ENCODE measurements at regions of chr12 and their contacts with region 1.

Region 1: DNA sequence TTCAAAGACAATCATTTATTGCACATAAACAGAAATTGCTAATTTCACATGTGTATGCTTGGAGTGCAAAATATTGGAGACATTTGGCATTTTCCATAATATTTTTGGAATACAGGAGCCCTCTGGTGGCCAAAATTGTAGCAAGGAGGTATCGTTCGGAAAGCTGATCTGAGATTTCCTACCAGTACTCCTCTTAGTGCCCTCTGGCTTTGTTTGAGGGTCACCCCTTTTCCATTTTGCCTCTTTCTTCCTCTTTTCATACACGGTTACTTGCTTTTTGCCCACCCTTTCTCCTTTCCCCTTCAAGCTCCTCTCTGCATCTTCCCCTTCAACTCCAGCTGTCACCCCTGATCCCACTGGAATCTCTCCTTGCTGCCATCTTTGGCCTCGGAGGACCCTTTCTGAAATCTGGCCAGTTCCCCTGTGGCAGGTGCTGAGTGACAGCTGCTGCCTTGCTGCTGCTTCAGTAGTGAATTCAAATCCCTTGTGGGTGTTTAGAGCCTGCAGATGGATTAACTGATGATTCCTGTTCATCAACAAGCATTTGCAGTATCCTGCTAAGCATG is 164.6 kb upstream of the PARP11 start:
- DNase-seq: peak; percentile 47
- H3K4me3 ChIP-seq: no peak overlapping the region
- H3K27ac ChIP-seq: no peak overlapping the region
- H3K4me1 ChIP-seq: peaks cover 19% of the 10 kb centered on the region
- H3K27me3 ChIP-seq: no peaks in the 10 kb centered on the region
- CTCF ChIP-seq: peak; percentile 75 to 79

Region 2: DNA sequence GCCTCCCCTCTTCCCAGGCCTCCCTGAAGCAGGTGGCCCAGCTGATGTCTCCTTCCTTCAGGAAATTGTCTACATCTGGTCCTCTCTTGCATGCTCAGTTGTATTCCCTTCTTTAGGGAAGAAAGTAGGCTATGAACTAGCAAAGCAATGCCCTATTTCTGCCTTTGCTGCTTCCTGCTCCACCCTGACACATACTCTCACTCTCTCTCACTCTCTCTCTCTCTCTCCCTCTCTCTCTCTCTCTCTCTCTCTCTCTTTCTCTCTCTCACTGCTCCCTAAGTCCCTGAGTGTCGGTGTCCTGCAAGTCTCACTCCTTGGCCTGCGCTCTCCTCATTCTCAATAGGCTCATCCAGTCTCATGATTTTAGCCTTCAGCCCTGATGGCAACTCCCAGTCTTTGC is 145.2 kb before region 1 on chr12:
- CTCF ChIA-PET with region 1: no interaction called
- dilution Hi-C with region 1: loop called (anchors 5 kb)
- in situ Hi-C with region 1: loop called (anchors 5 to 25 kb)
- intact Hi-C with region 1: no loop called
- DNase-seq: no peak
- H3K4me3 ChIP-seq: no peak overlapping the region
- H3K27ac ChIP-seq: no peak overlapping the region
- H3K4me1 ChIP-seq: no peaks in the 10 kb centered on the region
- H3K27me3 ChIP-seq: peaks cover 5% of the 10 kb centered on the region
- CTCF ChIP-seq: no peak

Region 3: GRCh38 chr12:3998968-3999826 is 38.6 kb before region 1 on chr12:
- CTCF ChIA-PET with region 1: interaction called, 40 read pairs
- dilution Hi-C with region 1: no loop called
- in situ Hi-C with region 1: loop called (anchors 5 kb)
- intact Hi-C with region 1: loop called (anchors 1 kb)
- DNase-seq: peak; percentile 96
- H3K4me3 ChIP-seq: no peak overlapping the region
- H3K27ac ChIP-seq: peak overlapping the region; percentile 90
- H3K4me1 ChIP-seq: peaks cover 34% of the 10 kb centered on the region
- H3K27me3 ChIP-seq: no peaks in the 10 kb centered on the region
- CTCF ChIP-seq: no peak

Region 4: GRCh38 chr12:4011597-4011996 is 26.2 kb before region 1 on chr12:
- CTCF ChIA-PET with region 1: interaction called, 28 read pairs
- dilution Hi-C with region 1: no loop called
- in situ Hi-C with region 1: no loop called
- intact Hi-C with region 1: no loop called
- DNase-seq: peak; percentile 97
- H3K4me3 ChIP-seq: no peak overlapping the region
- H3K27ac ChIP-seq: peak overlapping the region; percentile 90
- H3K4me1 ChIP-seq: peaks cover 31% of the 10 kb centered on the region
- H3K27me3 ChIP-seq: no peaks in the 10 kb centered on the region
- CTCF ChIP-seq: no peak

Region 5: DNA sequence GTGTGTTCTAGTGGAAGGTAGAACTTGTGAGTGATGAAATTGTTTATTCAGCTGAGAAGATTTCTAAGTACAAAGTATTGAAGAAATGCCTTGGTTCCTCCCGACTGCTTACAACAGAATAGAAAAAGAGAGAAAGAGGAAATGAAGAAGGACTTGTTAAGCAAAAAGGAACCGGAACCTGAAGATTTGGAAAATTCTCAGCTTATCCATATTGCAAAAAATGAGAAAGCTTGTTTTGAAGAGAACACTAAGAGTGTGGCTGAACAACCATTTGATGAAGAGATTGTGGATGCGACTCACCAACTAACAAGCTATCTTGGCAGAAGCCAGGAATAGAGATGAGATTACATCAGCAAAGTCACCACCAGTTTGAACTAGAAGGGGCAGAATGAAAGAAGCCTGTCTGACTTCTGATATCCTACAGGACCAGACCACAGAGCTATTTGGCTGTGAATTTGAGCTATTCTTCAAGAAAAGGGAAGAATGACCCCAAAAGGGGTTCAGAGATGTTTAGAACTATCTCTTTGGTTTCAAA is 626.2 kb after region 1 on chr12:
- CTCF ChIA-PET with region 1: no interaction called
- dilution Hi-C with region 1: no loop called
- in situ Hi-C with region 1: no loop called
- intact Hi-C with region 1: no loop called
- DNase-seq: peak; percentile 61
- H3K4me3 ChIP-seq: no peak overlapping the region
- H3K27ac ChIP-seq: no peak overlapping the region
- H3K4me1 ChIP-seq: no peaks in the 10 kb centered on the region
- H3K27me3 ChIP-seq: no peaks in the 10 kb centered on the region
- CTCF ChIP-seq: no peak